PC-9 (cell line): ENCODE measurements at regions of chr1 and their contacts with region 1.

Region 1: GRCh38 chr1:22556391-22557104 is 6.7 kb upstream of the EPHA8 start:
- DNase-seq: no peak
- H3K4me3 ChIP-seq: no peak overlapping the region
- H3K27ac ChIP-seq: no peak overlapping the region
- H3K4me1 ChIP-seq: no peaks in the 10 kb centered on the region
- H3K27me3 ChIP-seq: peaks cover 55% of the 10 kb centered on the region
- CTCF ChIP-seq: no peak

Region 2: DNA sequence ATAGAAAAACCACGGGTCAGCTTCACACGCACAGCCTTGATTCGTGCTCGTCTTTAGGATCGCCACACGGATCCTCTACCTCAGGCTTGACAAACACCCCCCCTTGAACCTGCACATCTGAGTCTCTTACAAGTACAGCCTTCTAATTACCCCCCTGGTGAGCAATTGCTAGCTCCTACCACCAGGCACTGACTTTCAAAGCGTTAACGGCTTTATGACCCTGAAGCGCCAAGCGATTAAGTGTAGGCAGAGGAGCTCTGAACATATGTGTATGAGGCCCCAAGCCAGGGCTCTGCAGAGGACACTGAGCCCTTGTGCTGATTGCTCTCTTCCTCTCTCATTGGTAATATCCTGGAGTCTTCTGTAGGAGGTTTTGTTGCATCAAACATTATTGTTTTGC is 49.0 kb before region 1 on chr1:
- CTCF ChIA-PET with region 1: interaction called, 15 read pairs
- POLR2A ChIA-PET with region 1: no interaction called
- intact Hi-C with region 1: no loop called
- DNase-seq: no peak
- H3K4me3 ChIP-seq: no peak overlapping the region
- H3K27ac ChIP-seq: no peak overlapping the region
- H3K4me1 ChIP-seq: no peaks in the 10 kb centered on the region
- H3K27me3 ChIP-seq: no peaks in the 10 kb centered on the region
- CTCF ChIP-seq: no peak

Region 3: DNA sequence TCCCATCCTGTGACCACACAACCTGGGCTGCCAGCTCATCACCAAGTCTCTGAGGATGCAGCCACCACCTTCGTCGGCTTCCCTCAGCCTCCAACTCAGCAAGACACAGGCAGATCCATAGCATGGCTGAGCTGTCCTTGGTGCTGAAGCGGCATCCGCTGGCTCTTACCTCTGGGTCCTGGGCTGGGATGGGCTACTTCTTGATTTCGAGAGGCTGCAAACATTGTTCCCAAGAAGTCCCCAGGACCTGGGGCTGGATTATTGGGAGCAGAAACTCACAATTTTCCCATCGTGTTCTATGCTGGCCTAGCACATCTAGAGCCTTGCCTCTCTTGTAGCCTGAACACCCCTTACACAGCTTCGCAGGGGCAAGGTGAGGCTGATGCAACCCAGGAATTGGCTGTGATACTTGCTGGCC is 55.0 kb after region 1 on chr1:
- CTCF ChIA-PET with region 1: no interaction called
- POLR2A ChIA-PET with region 1: no interaction called
- intact Hi-C with region 1: no loop called
- DNase-seq: peak; percentile 43 to 53
- H3K4me3 ChIP-seq: no peak overlapping the region
- H3K27ac ChIP-seq: no peak overlapping the region
- H3K4me1 ChIP-seq: no peaks in the 10 kb centered on the region
- H3K27me3 ChIP-seq: peaks cover 72% of the 10 kb centered on the region
- CTCF ChIP-seq: no peak

Region 4: GRCh38 chr1:22639286-22639685 is 82.7 kb after region 1 on chr1:
- CTCF ChIA-PET with region 1: no interaction called
- POLR2A ChIA-PET with region 1: no interaction called
- intact Hi-C with region 1: no loop called
- DNase-seq: no peak
- H3K4me3 ChIP-seq: no peak overlapping the region
- H3K27ac ChIP-seq: no peak overlapping the region
- H3K4me1 ChIP-seq: no peaks in the 10 kb centered on the region
- H3K27me3 ChIP-seq: peaks cover 16% of the 10 kb centered on the region; the same call in 1 of the 2 replicates
- CTCF ChIP-seq: no peak

Region 5: GRCh38 chr1:22995774-22996173 is 439.2 kb after region 1 on chr1:
- CTCF ChIA-PET with region 1: no interaction called
- POLR2A ChIA-PET with region 1: no interaction called
- intact Hi-C with region 1: no loop called
- DNase-seq: no peak
- H3K4me3 ChIP-seq: no peak overlapping the region
- H3K27ac ChIP-seq: peak overlapping the region; percentile 93; the same call in 1 of the 2 replicates
- H3K4me1 ChIP-seq: peaks cover 37% of the 10 kb centered on the region
- H3K27me3 ChIP-seq: no peaks in the 10 kb centered on the region
- CTCF ChIP-seq: no peak